ENCODE measurements at regions of chr7 and their contacts with region 1.

Region 1: DNA sequence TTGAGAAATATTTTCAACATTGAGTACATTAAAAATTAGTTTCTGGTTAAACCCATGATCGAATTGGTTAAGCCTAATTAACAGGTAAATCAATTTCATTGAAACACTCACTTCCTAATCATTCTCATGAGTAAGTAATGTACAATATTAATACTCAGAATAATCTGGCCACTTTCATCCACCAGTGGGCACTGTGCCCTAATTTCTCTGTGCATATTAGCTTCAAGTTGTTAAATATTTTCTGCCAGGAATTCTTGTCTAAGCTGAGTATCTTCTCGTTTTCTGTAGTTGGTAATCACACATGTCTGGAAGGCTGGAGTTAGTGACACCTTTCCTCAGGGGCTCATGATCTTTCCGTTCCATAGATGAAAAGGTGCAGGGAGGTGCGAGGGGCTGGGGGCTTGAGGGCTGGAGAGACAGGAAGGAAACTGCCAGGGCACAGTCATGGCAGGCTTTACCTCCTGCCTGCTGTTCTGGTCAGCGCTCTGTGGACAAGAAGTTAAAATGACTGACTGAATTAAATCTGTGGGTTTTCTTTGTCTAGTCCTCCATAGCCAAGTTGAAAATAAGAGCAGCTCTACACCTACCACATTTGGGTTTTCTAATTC is 71.9 kb downstream of the WIPF3 start:
- DNase-seq: peak; percentile 79
- H3K4me3 ChIP-seq: no peak overlapping the region
- H3K27ac ChIP-seq: no peak overlapping the region
- H3K4me1 ChIP-seq: peaks cover 0 to 2% of the 10 kb centered on the region in 2 experiments; a peak in 1 of 4 replicates
- H3K27me3 ChIP-seq: no peaks in the 10 kb centered on the region
- CTCF ChIP-seq: peak; percentile 95
- EP300 ChIP-seq: no peak
- RAD21 ChIP-seq: peak; percentile 97

Region 2: DNA sequence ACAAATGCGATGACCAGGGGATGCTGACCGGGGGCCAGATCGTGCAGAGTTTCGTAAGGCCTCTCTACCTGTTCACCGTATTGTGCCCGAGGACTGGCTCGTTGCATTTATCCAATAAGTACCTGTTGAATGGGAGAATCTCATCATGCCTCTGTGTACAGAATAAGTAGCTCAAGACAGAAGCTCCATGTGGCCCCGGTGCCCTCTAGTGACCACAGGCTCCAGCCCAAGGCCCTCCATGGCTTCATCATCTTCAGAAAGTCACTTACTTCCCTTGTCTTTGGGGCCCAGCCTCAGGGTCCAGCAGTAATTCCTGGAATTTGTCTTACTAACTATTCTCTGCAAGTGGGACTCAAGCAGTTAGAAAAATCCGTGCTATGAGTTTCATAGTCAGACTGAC is 532.6 kb before region 1 on chr7:
- CTCF ChIA-PET with region 1: no interaction called
- POLR2A ChIA-PET with region 1: no interaction called
- DNase-seq: peak; percentile 63
- H3K4me3 ChIP-seq: no peak overlapping the region
- H3K27ac ChIP-seq: no peak overlapping the region
- H3K4me1 ChIP-seq: peaks cover 4% of the 10 kb centered on the region in 2 experiments; a peak in 1 of 4 replicates
- H3K27me3 ChIP-seq: no peaks in the 10 kb centered on the region
- CTCF ChIP-seq: peak; percentile 37
- EP300 ChIP-seq: no peak
- RAD21 ChIP-seq: peak; percentile 93

Region 3: GRCh38 chr7:29748286-29749108 is 129.7 kb before region 1 on chr7:
- CTCF ChIA-PET with region 1: interaction called, 23 read pairs
- POLR2A ChIA-PET with region 1: no interaction called
- DNase-seq: peak; percentile 24
- H3K4me3 ChIP-seq: no peak overlapping the region; a peak in 1 of 4 replicates
- H3K27ac ChIP-seq: no peak overlapping the region
- H3K4me1 ChIP-seq: no peaks in the 10 kb centered on the region
- H3K27me3 ChIP-seq: 0 out of 2 replicates have a peak, but pooled peaks cover 3% of the 10 kb centered on the region
- CTCF ChIP-seq: peak; percentile 83
- EP300 ChIP-seq: no peak
- RAD21 ChIP-seq: peak; percentile 82

Region 4: DNA sequence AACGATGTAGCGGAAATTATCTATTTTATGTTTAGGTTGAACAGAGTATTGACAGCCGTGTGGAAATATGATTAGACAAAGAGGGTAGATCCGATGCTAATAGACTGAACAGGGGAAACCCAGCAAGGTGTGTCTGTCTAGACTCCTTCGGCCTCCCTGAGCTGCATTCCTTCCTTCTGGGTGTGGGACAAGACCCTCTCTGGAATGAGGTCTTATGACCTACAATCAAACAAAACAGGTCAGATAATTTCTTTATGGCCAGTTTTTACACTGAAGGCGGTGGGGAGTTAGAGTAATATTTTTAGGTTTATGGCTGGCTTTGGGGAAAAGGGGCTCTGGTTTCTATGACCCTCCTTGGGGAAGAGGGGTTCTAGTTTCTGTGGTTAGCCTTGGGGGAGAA is 30.7 kb before region 1 on chr7:
- CTCF ChIA-PET with region 1: interaction called, 13 read pairs
- POLR2A ChIA-PET with region 1: no interaction called
- DNase-seq: no peak
- H3K4me3 ChIP-seq: no peak overlapping the region
- H3K27ac ChIP-seq: no peak overlapping the region
- H3K4me1 ChIP-seq: no peaks in the 10 kb centered on the region
- H3K27me3 ChIP-seq: peaks cover 41% of the 10 kb centered on the region
- CTCF ChIP-seq: no peak
- EP300 ChIP-seq: no peak
- RAD21 ChIP-seq: no peak

Region 5: GRCh38 chr7:29894256-29894655 is 16.1 kb after region 1 on chr7:
- CTCF ChIA-PET with region 1: interaction called, 28 read pairs
- POLR2A ChIA-PET with region 1: no interaction called
- DNase-seq: peak; percentile 74
- H3K4me3 ChIP-seq: no peak overlapping the region
- H3K27ac ChIP-seq: peak overlapping the region in 1 of 2 experiments; percentile 44; a peak in 2 of 4 replicates
- H3K4me1 ChIP-seq: peaks cover 0 to 29% of the 10 kb centered on the region in 2 experiments; a peak in 2 of 4 replicates
- H3K27me3 ChIP-seq: no peaks in the 10 kb centered on the region; the same call in 1 of the 2 replicates
- CTCF ChIP-seq: no peak
- EP300 ChIP-seq: peak in 1 of 2 experiments; percentile 79; a peak in 2 of 4 replicates
- RAD21 ChIP-seq: peak; percentile 13; the same call in 1 of the 2 replicates

Region 6: GRCh38 chr7:30074422-30075030 is 196.3 kb after region 1 on chr7:
- CTCF ChIA-PET with region 1: interaction called, 14 read pairs
- POLR2A ChIA-PET with region 1: no interaction called
- DNase-seq: peak; percentile 32
- H3K4me3 ChIP-seq: no peak overlapping the region
- H3K27ac ChIP-seq: no peak overlapping the region
- H3K4me1 ChIP-seq: no peaks in the 10 kb centered on the region
- H3K27me3 ChIP-seq: no peaks in the 10 kb centered on the region
- CTCF ChIP-seq: peak; percentile 75
- EP300 ChIP-seq: no peak
- RAD21 ChIP-seq: peak; percentile 64

Measured in SK-N-SH (cell line).